Activated CD4-positive, alpha-beta memory T cell treated with anti-CD3 and anti-CD28 coated beads for 36 hours (primary cell): ENCODE measurements at regions of chr3 and their contacts with region 1.

Region 1: DNA sequence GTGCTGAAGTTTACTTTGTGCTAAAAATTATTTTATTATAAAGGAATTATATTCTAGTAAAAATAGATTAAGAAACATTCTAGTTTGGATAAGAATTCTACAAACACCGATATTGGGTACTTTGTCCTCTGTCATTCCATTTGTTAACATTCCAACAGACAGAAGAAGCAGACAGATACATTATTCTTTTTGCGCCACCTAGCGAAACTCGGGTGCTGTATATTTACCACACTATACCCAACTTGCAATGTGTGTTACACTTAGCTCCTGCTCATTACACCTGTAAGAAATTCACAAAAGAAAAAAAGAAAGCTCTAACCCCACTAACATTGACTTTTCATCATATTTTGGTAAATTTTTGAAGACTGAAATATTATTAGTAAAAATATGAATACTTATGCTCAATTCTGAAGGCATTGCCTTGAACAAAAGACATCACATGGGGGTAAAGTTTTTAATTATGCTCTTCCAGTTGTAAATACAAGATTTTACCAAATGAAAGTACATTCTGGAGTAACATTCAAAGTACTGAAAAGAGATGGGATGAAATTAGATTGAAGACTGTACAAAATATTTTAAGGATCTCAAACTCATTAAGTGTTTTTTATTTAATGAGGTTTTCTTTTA is 136.5 kb upstream of the MLF1 start:
- DNase-seq: peak; percentile 16
- H3K4me3 Mint-ChIP-seq: no peak overlapping the region
- H3K27ac Mint-ChIP-seq: no peak overlapping the region
- H3K4me1 Mint-ChIP-seq: no peaks in the 10 kb centered on the region
- H3K27me3 Mint-ChIP-seq: no peaks in the 10 kb centered on the region

Region 2: DNA sequence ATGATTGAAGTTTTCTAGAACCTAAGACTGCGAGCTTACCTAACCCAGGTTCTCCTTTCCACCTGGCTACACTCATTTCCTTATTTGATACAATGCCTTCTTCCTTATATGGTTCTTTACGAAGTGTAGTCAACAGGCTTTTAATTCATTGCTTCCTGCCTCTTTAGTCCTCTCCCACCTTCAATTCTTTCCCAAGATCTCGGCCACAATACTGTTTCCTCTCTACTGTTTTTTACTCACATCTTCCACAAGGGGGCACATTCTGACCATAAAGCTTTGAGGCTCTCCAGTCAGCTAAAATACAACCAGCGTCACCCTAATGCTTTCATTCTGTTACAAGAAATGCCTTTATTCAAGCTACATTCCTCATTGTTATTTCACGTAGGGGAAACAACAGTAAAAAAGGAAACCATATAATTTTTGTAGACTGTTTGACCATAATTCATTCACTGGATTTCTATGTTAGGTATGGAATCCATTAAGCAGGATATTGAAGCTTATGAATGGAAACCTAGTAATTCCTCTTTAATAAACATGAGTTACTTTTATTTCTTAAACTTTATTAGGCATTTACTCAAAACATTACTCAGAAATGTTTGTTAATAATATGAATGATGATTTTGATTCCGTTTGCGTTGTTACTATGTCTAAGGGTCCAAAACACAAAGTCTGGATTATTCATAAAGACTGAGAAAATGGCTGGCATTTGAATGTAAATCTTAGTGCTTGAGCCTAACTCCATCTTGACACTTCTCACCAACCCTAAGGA is 901.8 kb before region 1 on chr3:
- CTCF ChIA-PET with region 1: interaction called, 3 read pairs
- POLR2A ChIA-PET with region 1: no interaction called
- intact Hi-C with region 1: loop called (anchors 10 kb)
- DNase-seq: no peak
- H3K4me3 Mint-ChIP-seq: no peak overlapping the region
- H3K27ac Mint-ChIP-seq: no peak overlapping the region
- H3K4me1 Mint-ChIP-seq: no peaks in the 10 kb centered on the region
- H3K27me3 Mint-ChIP-seq: no peaks in the 10 kb centered on the region

Region 3: DNA sequence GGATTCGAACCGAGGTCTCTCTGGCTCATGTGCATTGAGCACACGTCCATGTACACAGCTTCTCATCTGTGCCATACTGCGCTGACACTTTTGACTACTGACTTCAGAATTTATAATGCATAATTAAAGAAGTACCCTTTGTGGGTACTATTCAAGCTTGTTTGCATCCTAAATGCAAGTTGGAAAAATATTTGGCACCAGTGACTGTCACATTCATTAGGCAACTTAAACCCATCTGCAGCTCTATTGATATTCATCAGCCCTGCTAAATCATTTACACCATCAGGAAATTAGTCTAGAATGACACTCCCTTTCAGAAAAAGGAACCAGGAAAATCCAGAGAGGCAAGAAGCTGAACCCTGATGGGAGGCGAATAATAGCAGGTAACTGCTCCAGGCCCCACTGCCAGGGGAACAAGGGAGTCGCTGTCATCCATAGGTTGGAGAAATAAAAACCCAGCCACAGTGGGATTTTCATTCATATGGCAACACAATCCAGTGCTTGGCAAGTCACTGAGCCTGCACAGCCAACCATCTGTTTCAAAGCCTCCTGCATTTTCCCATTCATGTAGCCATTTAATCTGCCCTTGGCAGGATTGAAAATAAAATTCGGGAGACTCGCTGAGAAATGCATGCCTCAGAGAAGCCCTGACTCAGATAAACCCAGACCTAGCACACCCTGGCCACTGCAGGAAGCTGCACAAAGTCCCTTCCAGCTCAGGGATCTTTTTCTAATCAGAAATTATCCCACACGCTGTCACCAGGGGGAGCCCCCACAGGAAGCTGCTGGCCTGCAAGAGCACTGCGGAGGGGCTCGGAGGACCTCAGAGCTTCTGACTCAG is 828.3 kb before region 1 on chr3:
- CTCF ChIA-PET with region 1: interaction called, 21 read pairs
- POLR2A ChIA-PET with region 1: no interaction called
- intact Hi-C with region 1: no loop called
- DNase-seq: peak; percentile 71
- H3K4me3 Mint-ChIP-seq: no peak overlapping the region
- H3K27ac Mint-ChIP-seq: no peak overlapping the region
- H3K4me1 Mint-ChIP-seq: peaks cover 3% of the 10 kb centered on the region
- H3K27me3 Mint-ChIP-seq: peaks cover 5% of the 10 kb centered on the region

Region 4: DNA sequence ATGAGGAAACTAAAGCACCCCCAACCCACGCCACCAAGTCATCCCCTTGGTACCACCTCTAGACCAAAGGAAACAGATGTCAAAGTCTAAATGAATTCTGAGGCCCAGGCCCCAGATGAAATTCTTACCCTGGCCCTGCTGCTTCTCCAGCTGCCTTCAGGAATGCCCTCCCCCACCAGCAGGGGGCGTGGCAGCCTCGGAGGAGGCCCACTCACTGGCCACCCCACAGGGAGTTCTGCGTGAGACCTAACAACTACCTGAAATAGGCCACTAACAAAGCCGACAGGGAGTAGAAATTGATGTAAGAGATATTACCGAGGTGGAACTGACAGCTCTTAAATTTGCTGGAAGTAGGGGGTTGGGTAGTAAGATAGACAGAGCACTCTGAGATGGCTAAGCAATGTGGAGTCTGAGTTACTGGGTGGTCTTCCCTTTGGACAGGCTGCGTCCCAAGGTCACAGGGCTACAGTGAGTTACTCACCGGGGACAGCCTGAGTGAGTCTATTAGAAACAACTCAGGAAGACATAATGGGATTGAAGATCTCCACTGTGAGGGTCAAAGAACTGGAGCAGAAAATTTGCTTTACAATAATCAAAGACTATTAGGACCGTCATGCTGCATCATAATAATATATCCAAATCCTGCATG is 569.0 kb before region 1 on chr3:
- CTCF ChIA-PET with region 1: interaction called, 7 read pairs
- POLR2A ChIA-PET with region 1: no interaction called
- intact Hi-C with region 1: loop called (anchors 2 kb)
- DNase-seq: peak; percentile 58
- H3K4me3 Mint-ChIP-seq: no peak overlapping the region
- H3K27ac Mint-ChIP-seq: no peak overlapping the region
- H3K4me1 Mint-ChIP-seq: no peaks in the 10 kb centered on the region
- H3K27me3 Mint-ChIP-seq: no peaks in the 10 kb centered on the region

Region 5: DNA sequence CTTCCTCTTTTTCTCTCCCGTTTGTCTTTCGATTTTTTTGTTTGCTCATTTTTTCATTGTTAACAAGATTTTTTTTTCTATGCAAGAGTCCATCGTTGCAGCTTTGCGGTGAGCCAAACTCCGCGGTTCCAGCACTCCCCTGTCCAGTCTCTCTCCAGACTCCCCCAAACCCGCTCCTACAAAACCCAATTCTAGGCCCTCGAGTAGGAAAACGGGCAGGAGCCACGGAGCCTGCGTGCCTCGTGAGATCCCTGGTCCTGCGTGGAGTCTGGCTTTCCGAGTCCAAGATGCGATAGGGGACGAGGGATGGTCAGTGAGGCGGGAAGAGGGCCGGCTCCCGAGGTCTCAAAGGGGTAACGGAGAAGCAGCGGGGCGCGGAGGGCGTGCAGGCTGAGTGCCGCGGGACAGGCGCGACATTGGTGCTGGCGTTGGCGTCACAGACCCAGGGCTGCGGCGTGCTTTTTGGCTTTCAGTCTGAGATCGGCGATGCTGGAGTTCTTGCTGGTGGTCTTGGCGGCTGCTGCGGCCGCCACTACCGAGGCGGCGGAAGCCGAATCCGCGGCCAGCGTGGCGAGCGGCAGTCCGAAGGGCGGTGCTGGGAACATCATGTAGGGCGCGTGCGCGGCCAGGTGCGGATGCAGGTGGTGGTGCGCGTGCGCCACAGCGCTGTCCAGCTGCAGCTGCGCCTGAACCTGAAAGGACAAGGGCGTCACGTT is 336.8 kb before region 1 on chr3:
- CTCF ChIA-PET with region 1: no interaction called
- POLR2A ChIA-PET with region 1: no interaction called
- intact Hi-C with region 1: loop called (anchors 5 kb)
- DNase-seq: peak; percentile 85
- H3K4me3 Mint-ChIP-seq: peak overlapping the region; percentile 83
- H3K27ac Mint-ChIP-seq: no peak overlapping the region
- H3K4me1 Mint-ChIP-seq: peaks cover 16% of the 10 kb centered on the region
- H3K27me3 Mint-ChIP-seq: peaks cover 78% of the 10 kb centered on the region

Region 6: DNA sequence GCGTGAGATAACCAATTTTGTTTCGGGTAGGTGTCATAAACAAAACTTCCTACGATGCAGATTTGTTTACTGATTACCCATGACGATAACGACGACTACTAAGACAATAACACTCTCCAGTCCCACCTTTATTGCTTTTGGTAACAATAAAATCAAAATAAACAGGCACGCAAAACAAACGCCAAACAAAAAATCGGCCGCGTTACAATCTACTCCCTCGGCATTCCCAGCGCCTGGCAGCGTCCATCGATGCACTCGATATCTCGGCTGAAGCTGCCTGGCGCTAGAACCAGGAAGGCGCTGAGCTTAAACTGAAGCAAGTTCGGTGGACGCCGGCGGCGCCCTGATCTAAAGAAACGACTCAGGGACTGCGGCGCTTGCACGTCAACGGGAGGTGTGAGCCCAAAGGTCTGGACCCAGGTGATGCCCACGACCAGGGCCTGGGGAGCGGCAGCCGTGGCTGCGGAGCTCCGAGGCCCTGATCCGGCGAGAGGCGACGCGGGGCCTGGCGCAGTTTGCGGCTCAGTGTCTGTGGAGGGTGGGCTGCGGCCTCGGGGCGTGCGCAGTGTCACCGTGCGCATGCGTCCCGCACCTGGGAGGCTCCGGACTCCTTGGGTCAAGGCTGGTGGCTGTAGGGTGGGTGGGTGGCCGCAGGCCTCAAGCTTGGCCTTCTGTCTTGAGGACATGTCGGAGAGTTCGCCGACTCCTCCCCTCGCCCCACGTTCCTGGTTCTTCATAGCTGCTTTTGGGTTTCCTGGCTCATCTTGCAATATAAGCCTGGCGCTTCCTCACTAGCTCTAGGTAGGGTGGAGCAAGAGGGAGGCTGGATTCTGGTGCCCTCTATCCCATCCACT is 324.5 kb before region 1 on chr3 and contains the start of gene RSRC1:
- CTCF ChIA-PET with region 1: no interaction called
- POLR2A ChIA-PET with region 1: no interaction called
- intact Hi-C with region 1: loop called (anchors 1 kb)
- DNase-seq: peak; percentile 85
- H3K4me3 Mint-ChIP-seq: peak within 1 kb of the TSS; percentile 99
- H3K27ac Mint-ChIP-seq: peak within 1 kb of the TSS; percentile 77
- H3K4me1 Mint-ChIP-seq: peaks cover 54% of the 10 kb centered on the region
- H3K27me3 Mint-ChIP-seq: peaks cover 36% of the 10 kb centered on the region
- total RNA-seq, gene RSRC1: 39.4 to 43.8 TPM

Region 7: GRCh38 chr3:158617982-158618875 is 183.7 kb after region 1 on chr3:
- CTCF ChIA-PET with region 1: no interaction called
- POLR2A ChIA-PET with region 1: no interaction called
- intact Hi-C with region 1: no loop called
- DNase-seq: no peak
- H3K4me3 Mint-ChIP-seq: no peak overlapping the region
- H3K27ac Mint-ChIP-seq: no peak overlapping the region
- H3K4me1 Mint-ChIP-seq: no peaks in the 10 kb centered on the region
- H3K27me3 Mint-ChIP-seq: peaks cover 3% of the 10 kb centered on the region

Region 8: GRCh38 chr3:158773845-158774830 is 339.6 kb after region 1 on chr3:
- CTCF ChIA-PET with region 1: no interaction called
- POLR2A ChIA-PET with region 1: no interaction called
- intact Hi-C with region 1: no loop called
- DNase-seq: no peak
- H3K4me3 Mint-ChIP-seq: no peak overlapping the region
- H3K27ac Mint-ChIP-seq: no peak overlapping the region
- H3K4me1 Mint-ChIP-seq: no peaks in the 10 kb centered on the region
- H3K27me3 Mint-ChIP-seq: no peaks in the 10 kb centered on the region